AG04449 (cell line): ENCODE measurements at regions of chr2 and their contacts with region 1.

Region 1: DNA sequence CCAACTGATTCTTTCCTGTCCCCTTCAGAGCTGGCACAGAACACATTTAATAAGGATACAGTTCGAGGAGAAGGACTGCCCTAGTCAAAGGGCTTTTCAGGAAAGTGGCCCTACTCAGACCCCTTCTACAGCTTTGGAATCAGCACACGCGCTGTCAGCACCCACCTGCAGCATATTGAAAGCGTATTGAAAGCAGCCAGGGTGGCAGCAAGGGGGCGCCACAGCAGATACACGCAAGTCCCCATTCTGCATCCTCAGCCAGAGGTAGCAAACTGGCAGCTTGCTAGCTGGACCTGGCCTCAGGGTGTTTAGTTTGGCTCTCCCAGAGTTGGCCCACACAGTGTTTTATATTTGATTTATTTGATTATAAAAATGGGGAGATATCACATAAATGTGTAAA is 101.0 kb upstream of the NT5C1B start:
- DNase-seq: no peak
- H3K4me3 ChIP-seq: no peak overlapping the region
- CTCF ChIP-seq: no peak

Region 2: DNA sequence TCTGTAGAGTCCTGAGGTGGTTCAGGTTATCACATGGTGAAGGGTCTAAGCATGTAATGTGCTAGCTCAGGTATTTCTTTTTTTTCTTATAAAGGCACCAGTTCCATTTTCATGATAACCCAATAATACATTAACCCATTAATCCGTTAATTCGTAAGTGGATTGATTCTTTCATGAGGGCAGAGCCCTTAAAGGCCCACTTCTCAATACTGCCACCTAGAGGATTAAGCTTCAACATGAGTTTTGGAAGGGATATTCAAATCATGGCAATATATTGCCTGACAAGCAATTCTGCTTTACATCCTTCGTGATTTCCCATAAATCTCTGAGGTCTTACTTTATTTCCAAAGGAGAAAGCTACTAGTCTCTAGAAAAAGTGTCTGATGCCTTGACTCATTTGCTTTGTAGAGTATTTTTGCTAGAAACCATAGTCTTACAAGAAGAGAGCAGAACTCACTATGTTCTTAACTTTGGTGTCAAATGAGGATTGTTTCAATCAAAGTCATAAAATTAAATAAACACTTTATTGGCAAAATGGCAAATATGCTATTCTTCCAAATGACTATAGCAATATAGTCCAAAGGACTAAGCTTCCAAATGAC is 540.6 kb before region 1 on chr2:
- CTCF ChIA-PET with region 1: no interaction called
- POLR2A ChIA-PET with region 1: no interaction called
- DNase-seq: no peak
- H3K4me3 ChIP-seq: no peak overlapping the region
- CTCF ChIP-seq: peak; percentile 58

Region 3: GRCh38 chr2:18701981-18702380 is 11.6 kb after region 1 on chr2:
- CTCF ChIA-PET with region 1: interaction called, 12 read pairs
- POLR2A ChIA-PET with region 1: no interaction called
- DNase-seq: no peak
- H3K4me3 ChIP-seq: no peak overlapping the region
- CTCF ChIP-seq: no peak